ENCODE measurements at regions of chr9 and their contacts with region 1.

Region 1: GRCh38 chr9:128552153-128552743 is at the start of gene SPTAN1:
- DNase-seq: peak; percentile 98
- ATAC-seq: peak; percentile 78
- H3K4me3 Mint-ChIP-seq: no peak within 1 kb of the TSS
- H3K27ac Mint-ChIP-seq: peak within 1 kb of the TSS; percentile 97
- H3K4me1 Mint-ChIP-seq: peaks cover 34% of the 10 kb centered on the region
- H3K27me3 Mint-ChIP-seq: no peaks in the 10 kb centered on the region
- total RNA-seq, gene SPTAN1: 192 to 269 TPM

Region 2: GRCh38 chr9:128275996-128276573 is 276.2 kb before region 1 on chr9 and contains the starts of genes GOLGA2 and SWI5:
- CTCF ChIA-PET with region 1: no interaction called
- POLR2A ChIA-PET with region 1: no interaction called
- intact Hi-C with region 1: loop called in 1 of 2 experiments (anchors 1 kb)
- DNase-seq: peak; percentile 100
- ATAC-seq: peak; percentile 99
- H3K4me3 Mint-ChIP-seq: peak within 1 kb of the TSS; percentile 97
- H3K27ac Mint-ChIP-seq: peak within 1 kb of the TSS; percentile 95
- H3K4me1 Mint-ChIP-seq: peaks cover 31% of the 10 kb centered on the region
- H3K27me3 Mint-ChIP-seq: no peaks in the 10 kb centered on the region
- total RNA-seq, gene GOLGA2: 28.4 to 29.4 TPM
- total RNA-seq, gene SWI5: 13.1 to 14.1 TPM

Region 3: GRCh38 chr9:128504485-128505413 is 47.5 kb before region 1 on chr9 and contains the start of gene GLE1:
- CTCF ChIA-PET with region 1: interaction called, 4 read pairs
- POLR2A ChIA-PET with region 1: interaction called, 13 read pairs
- intact Hi-C with region 1: loop called (anchors 1 kb)
- DNase-seq: peak; percentile 98
- ATAC-seq: peak; percentile 99
- H3K4me3 Mint-ChIP-seq: peak within 1 kb of the TSS; percentile 95
- H3K27ac Mint-ChIP-seq: peak within 1 kb of the TSS; percentile 99
- H3K4me1 Mint-ChIP-seq: peaks cover 21% of the 10 kb centered on the region
- H3K27me3 Mint-ChIP-seq: no peaks in the 10 kb centered on the region
- total RNA-seq, gene GLE1: 52.5 to 54.4 TPM

Region 4: GRCh38 chr9:128688512-128689292 is 136.5 kb after region 1 on chr9 and contains the start of gene SET:
- CTCF ChIA-PET with region 1: no interaction called
- POLR2A ChIA-PET with region 1: interaction called, 5 read pairs
- intact Hi-C with region 1: loop called (anchors 1 to 2 kb)
- DNase-seq: peak; percentile 96
- ATAC-seq: peak; percentile 71
- H3K4me3 Mint-ChIP-seq: peak within 1 kb of the TSS; percentile 99
- H3K27ac Mint-ChIP-seq: peak within 1 kb of the TSS; percentile 94
- H3K4me1 Mint-ChIP-seq: peaks cover 61% of the 10 kb centered on the region
- H3K27me3 Mint-ChIP-seq: no peaks in the 10 kb centered on the region
- total RNA-seq, gene SET: 673 to 682 TPM

Region 5: GRCh38 chr9:128818099-128818838 is 266.0 kb after region 1 on chr9 and contains the start of gene ENDOG:
- CTCF ChIA-PET with region 1: no interaction called
- POLR2A ChIA-PET with region 1: no interaction called
- intact Hi-C with region 1: loop called in 1 of 2 experiments (anchors 1 kb)
- DNase-seq: peak; percentile 98
- ATAC-seq: peak; percentile 98
- H3K4me3 Mint-ChIP-seq: peak within 1 kb of the TSS; percentile 76
- H3K27ac Mint-ChIP-seq: peak within 1 kb of the TSS; percentile 80
- H3K4me1 Mint-ChIP-seq: peaks cover 13% of the 10 kb centered on the region
- H3K27me3 Mint-ChIP-seq: no peaks in the 10 kb centered on the region
- total RNA-seq, gene ENDOG: 7.3 to 9.3 TPM

Region 6: DNA sequence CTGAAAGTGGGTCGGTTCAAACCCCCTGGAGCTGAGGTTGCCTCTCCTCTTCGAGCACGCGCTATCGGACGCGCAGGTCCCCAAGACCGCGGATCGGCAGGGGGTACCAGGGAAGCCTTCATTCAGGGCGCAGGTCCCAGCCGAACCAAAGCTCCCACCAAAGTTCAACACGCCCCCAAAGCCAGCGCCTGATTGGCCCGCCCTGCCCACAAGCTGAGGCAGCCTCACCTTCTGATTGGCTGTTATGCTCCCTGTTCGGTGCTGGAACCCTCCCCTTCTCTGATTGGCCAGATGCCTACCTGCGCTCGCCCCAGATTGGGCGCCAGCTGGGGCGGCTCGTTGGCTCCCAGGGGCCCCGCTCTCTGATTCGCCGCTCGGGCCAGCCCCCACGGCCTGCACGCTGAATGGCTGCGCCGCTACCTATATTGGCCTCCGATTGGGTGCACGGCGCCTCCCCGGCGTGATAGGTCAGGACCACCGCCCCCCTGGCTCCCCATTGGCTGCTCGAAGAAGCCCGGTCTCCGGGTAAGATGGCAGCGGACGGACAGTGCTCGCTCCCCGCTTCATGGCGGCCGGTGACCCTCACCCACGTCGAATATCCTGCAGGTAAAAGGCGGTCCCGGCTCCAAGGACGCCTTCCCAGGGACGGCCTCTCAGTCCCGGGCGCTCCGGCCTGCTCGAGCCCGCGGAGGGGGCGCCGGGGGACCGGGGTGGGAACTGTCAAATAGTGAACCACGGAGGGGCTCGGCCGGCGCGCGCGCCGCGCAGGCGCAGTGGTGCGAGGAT is 528.5 kb after region 1 on chr9 and contains the start of gene DOLPP1:
- CTCF ChIA-PET with region 1: no interaction called
- POLR2A ChIA-PET with region 1: no interaction called
- intact Hi-C with region 1: loop called in 1 of 2 experiments (anchors 2 kb)
- DNase-seq: peak; percentile 99
- ATAC-seq: peak; percentile 98
- H3K4me3 Mint-ChIP-seq: peak within 1 kb of the TSS; percentile 83
- H3K27ac Mint-ChIP-seq: peak within 1 kb of the TSS; percentile 63
- H3K4me1 Mint-ChIP-seq: peaks cover 20% of the 10 kb centered on the region
- H3K27me3 Mint-ChIP-seq: no peaks in the 10 kb centered on the region
- total RNA-seq, gene DOLPP1: 15.1 to 16.4 TPM